A673 (cell line): ENCODE measurements at regions of chr9 and their contacts with region 1.

Region 1: GRCh38 chr9:26744191-26744965 is 148.2 kb downstream of the CAAP1 start:
- DNase-seq: peak; percentile 9
- H3K4me3 ChIP-seq: no peak overlapping the region
- H3K27ac ChIP-seq: no peak overlapping the region
- H3K4me1 ChIP-seq: no peaks in the 10 kb centered on the region
- H3K27me3 ChIP-seq: no peaks in the 10 kb centered on the region
- CTCF ChIP-seq: peak; percentile 60

Region 2: DNA sequence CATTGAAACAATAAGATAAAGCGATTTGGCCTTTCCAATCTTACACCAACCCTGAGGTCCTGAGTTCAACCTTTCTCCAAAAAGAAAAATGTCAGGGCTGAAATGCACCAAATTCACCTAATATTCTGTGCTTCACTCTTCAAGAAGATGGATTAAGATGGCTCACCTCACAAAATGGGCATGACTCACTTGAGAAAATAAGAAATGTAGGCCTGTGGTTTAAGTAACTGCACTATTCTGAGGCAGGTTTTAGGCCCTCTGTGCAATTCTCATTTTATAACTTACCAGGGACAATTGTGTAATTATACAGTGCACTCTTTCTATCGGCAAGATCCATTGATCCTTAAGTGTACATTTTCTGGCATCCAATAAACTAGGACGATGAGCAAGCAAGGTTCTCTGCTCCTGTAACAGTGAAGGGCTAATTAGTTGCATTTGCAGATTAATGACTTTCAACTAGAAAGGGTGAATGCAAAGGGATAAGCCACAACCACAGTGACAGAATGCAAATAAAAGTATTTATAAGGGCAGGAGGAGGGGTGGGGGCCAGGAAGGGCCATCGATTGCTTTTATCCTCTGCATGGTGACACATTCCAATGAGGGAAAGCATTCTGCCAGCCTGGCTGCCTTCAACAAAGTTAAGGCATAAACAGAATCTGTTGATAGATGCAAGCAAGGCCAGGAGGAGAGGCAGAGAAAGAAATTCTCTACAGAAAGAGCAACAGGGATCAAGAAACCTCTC is 66.2 kb before region 1 on chr9:
- CTCF ChIA-PET with region 1: no interaction called
- POLR2A ChIA-PET with region 1: no interaction called
- intact Hi-C with region 1: no loop called
- DNase-seq: no peak
- H3K4me3 ChIP-seq: no peak overlapping the region
- H3K27ac ChIP-seq: no peak overlapping the region
- H3K4me1 ChIP-seq: no peaks in the 10 kb centered on the region
- H3K27me3 ChIP-seq: no peaks in the 10 kb centered on the region
- CTCF ChIP-seq: no peak

Region 3: GRCh38 chr9:26856413-26857032 is 112.1 kb after region 1 on chr9:
- CTCF ChIA-PET with region 1: no interaction called
- POLR2A ChIA-PET with region 1: no interaction called
- intact Hi-C with region 1: loop called (anchors 5 kb)
- DNase-seq: peak; percentile 47
- H3K4me3 ChIP-seq: no peak overlapping the region
- H3K27ac ChIP-seq: no peak overlapping the region
- H3K4me1 ChIP-seq: no peaks in the 10 kb centered on the region
- H3K27me3 ChIP-seq: no peaks in the 10 kb centered on the region
- CTCF ChIP-seq: peak; percentile 57

Region 4: DNA sequence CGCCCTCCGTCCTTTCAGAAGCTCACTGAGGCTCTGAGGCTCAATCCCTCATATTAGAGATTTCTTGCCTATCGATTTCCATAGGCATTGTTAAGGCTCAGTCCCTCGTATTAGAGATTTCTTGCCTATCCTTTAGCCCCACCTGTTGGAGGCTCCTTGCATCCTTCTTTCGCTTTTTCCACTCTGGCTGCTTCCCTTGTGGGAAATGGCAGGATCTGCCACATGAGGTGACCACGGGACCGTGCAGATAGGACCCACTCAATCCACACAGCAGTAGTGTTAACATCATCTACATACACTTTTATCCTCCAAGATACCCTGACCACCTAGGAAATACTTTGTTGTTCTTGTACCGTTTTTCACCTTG is 231.3 kb after region 1 on chr9:
- CTCF ChIA-PET with region 1: no interaction called
- POLR2A ChIA-PET with region 1: no interaction called
- intact Hi-C with region 1: loop called (anchors 2 kb)
- DNase-seq: peak; percentile 52
- H3K4me3 ChIP-seq: no peak overlapping the region
- H3K27ac ChIP-seq: no peak overlapping the region
- H3K4me1 ChIP-seq: no peaks in the 10 kb centered on the region
- H3K27me3 ChIP-seq: no peaks in the 10 kb centered on the region
- CTCF ChIP-seq: peak; percentile 55